Posterior vena cava (tissue), 2 donors: ENCODE measurements at regions of chr11 and their contacts with region 1.

Region 1: GRCh38 chr11:60130496-60130895 is 42.0 kb downstream of the MS4A2 start:
- DNase-seq: no peak

Region 2: GRCh38 chr11:59957094-59957493 is 173.4 kb before region 1 on chr11:
- intact Hi-C with region 1: loop called in 1 of 2 experiments (anchors 5 kb)
- DNase-seq: no peak